ENCODE measurements at regions of chr11 and their contacts with region 1.

Region 1: GRCh38 chr11:65440831-65441499 is 18.4 kb downstream of the NEAT1 start:
- DNase-seq: peak; percentile 22 to 35
- H3K4me3 ChIP-seq: no peak overlapping the region
- H3K27ac ChIP-seq: peak overlapping the region; percentile 64
- H3K4me1 ChIP-seq: peaks cover 50% of the 10 kb centered on the region
- H3K27me3 ChIP-seq: no peaks in the 10 kb centered on the region
- CTCF ChIP-seq: no peak

Region 2: GRCh38 chr11:65429724-65430405 is 11.1 kb before region 1 on chr11:
- CTCF ChIA-PET with region 1: no interaction called
- POLR2A ChIA-PET with region 1: interaction called, 18 read pairs
- intact Hi-C with region 1: no loop called
- DNase-seq: peak in 1 of 2 experiments; percentile 56
- H3K4me3 ChIP-seq: no peak overlapping the region
- H3K27ac ChIP-seq: peak overlapping the region; percentile 100
- H3K4me1 ChIP-seq: peaks cover 54% of the 10 kb centered on the region
- H3K27me3 ChIP-seq: no peaks in the 10 kb centered on the region
- CTCF ChIP-seq: no peak

Region 3: GRCh38 chr11:65454696-65455456 is 13.9 kb after region 1 on chr11:
- CTCF ChIA-PET with region 1: no interaction called
- POLR2A ChIA-PET with region 1: interaction called, 5 read pairs
- intact Hi-C with region 1: loop called (anchors 2 kb)
- DNase-seq: peak; percentile 81 to 91
- H3K4me3 ChIP-seq: peak overlapping the region; percentile 58
- H3K27ac ChIP-seq: peak overlapping the region; percentile 21
- H3K4me1 ChIP-seq: peaks cover 25% of the 10 kb centered on the region
- H3K27me3 ChIP-seq: no peaks in the 10 kb centered on the region
- CTCF ChIP-seq: no peak

Region 4: GRCh38 chr11:65652511-65653231 is 211.7 kb after region 1 on chr11:
- CTCF ChIA-PET with region 1: no interaction called
- POLR2A ChIA-PET with region 1: no interaction called
- intact Hi-C with region 1: no loop called
- DNase-seq: peak; percentile 82 to 98
- H3K4me3 ChIP-seq: peak overlapping the region; percentile 64
- H3K27ac ChIP-seq: peak overlapping the region; percentile 76
- H3K4me1 ChIP-seq: peaks cover 35% of the 10 kb centered on the region
- H3K27me3 ChIP-seq: no peaks in the 10 kb centered on the region
- CTCF ChIP-seq: no peak

Measured in PC-9 (cell line).